Panc1 (cell line): ENCODE measurements at regions of chr5 and their contacts with region 1.

Region 1: GRCh38 chr5:177412603-177413233 is 3.4 kb upstream of the F12 start:
- DNase-seq: no peak
- ATAC-seq: no peak
- H3K4me3 ChIP-seq: no peak overlapping the region
- H3K27ac ChIP-seq: no peak overlapping the region
- H3K4me1 ChIP-seq: no peaks in the 10 kb centered on the region
- H3K27me3 ChIP-seq: no peaks in the 10 kb centered on the region
- CTCF ChIP-seq: no peak

Region 2: GRCh38 chr5:177303121-177303924 is 109.4 kb before region 1 on chr5 and contains the starts of genes PRELID1 and RAB24:
- CTCF ChIA-PET with region 1: interaction called, 12 read pairs
- POLR2A ChIA-PET with region 1: no interaction called
- in situ Hi-C with region 1: no loop called
- intact Hi-C with region 1: no loop called
- DNase-seq: no peak
- ATAC-seq: peak; percentile 77
- H3K4me3 ChIP-seq: peak within 1 kb of the TSS; percentile 81 to 97
- H3K27ac ChIP-seq: peak within 1 kb of the TSS; percentile 94
- H3K4me1 ChIP-seq: peaks cover 34% of the 10 kb centered on the region
- H3K27me3 ChIP-seq: no peaks in the 10 kb centered on the region
- CTCF ChIP-seq: peak; percentile 63
- total RNA-seq, gene PRELID1: 275 TPM
- total RNA-seq, gene RAB24: 37.2 TPM

Region 3: DNA sequence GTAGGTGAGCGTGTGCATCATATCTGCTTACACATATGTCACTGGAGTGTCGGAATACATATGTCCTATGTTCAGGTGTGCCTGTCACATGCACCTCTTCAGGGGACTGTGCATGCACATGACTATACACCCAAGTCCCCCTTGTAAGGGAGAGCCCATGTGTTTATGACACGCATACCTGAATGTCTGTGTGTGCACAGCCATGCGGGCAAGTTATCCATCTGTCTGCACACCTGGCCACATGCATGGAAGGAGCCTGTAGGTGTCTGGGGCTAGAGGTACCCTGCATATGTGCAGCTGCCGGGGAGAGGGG is 55.6 kb before region 1 on chr5:
- CTCF ChIA-PET with region 1: no interaction called
- POLR2A ChIA-PET with region 1: no interaction called
- in situ Hi-C with region 1: no loop called
- intact Hi-C with region 1: no loop called
- DNase-seq: no peak
- ATAC-seq: no peak
- H3K4me3 ChIP-seq: no peak overlapping the region
- H3K27ac ChIP-seq: no peak overlapping the region
- H3K4me1 ChIP-seq: 0 out of 2 replicates have a peak, but pooled peaks cover 2% of the 10 kb centered on the region
- H3K27me3 ChIP-seq: no peaks in the 10 kb centered on the region
- CTCF ChIP-seq: no peak

Region 4: GRCh38 chr5:177397875-177398390 is 14.8 kb before region 1 on chr5:
- CTCF ChIA-PET with region 1: no interaction called
- POLR2A ChIA-PET with region 1: no interaction called
- in situ Hi-C with region 1: no loop called
- intact Hi-C with region 1: no loop called
- DNase-seq: no peak
- ATAC-seq: no peak
- H3K4me3 ChIP-seq: no peak overlapping the region
- H3K27ac ChIP-seq: no peak overlapping the region
- H3K4me1 ChIP-seq: peaks cover 7% of the 10 kb centered on the region
- H3K27me3 ChIP-seq: no peaks in the 10 kb centered on the region
- CTCF ChIP-seq: no peak